MCF 10A (cell line): ENCODE measurements at regions of chr9 and their contacts with region 1.

Region 1: GRCh38 chr9:134778841-134779411 is 101.7 kb upstream of the FCN2 start:
- DNase-seq: peak; percentile 69
- H3K4me3 Mint-ChIP-seq: peak overlapping the region; percentile 12
- H3K27ac Mint-ChIP-seq: peak overlapping the region; percentile 57
- H3K4me1 Mint-ChIP-seq: peaks cover 23% of the 10 kb centered on the region
- H3K27me3 Mint-ChIP-seq: peaks cover 45% of the 10 kb centered on the region
- CTCF ChIP-seq: peak; percentile 65

Region 2: DNA sequence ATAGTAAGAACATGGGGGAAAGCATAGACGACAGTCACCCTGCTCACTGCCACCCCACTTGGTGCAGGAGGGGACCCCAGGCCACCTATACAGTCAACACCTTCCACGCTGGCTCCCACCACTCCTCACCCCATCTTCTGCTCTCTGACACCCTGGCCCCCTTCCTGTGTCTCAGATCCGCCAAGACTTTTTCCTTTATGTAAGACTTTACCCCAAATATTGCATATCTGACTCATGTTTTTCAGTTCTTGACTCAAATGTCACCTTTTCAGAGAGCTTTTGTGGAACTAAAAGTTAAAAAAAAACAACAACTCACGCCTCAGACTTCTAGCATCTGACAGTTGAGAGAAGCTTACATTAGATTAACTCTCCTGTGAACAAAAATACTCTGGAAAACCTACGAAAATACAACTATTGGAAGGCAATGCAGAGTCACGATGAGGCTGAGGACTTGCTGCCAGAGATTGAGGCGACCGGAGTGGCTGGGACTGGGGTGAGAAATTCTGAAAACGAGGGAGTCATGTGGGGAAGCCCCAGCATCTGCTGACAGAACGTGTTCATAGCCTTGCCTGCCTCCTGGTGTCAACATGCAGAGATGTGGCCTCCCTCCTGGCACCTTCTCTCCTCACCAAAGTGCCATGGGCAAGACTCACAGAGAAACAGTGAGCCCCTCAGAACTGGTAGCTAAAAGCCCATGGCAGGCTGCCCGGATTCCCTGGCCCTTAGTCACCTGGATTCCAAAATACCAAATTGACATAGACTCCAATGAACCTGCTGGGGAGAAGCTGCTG is 79.3 kb after region 1 on chr9:
- CTCF ChIA-PET with region 1: interaction called, 4 read pairs
- POLR2A ChIA-PET with region 1: interaction called, 4 read pairs
- intact Hi-C with region 1: loop called (anchors 2 kb)
- DNase-seq: peak; percentile 76
- H3K4me3 Mint-ChIP-seq: no peak overlapping the region
- H3K27ac Mint-ChIP-seq: no peak overlapping the region
- H3K4me1 Mint-ChIP-seq: peaks cover 11% of the 10 kb centered on the region
- H3K27me3 Mint-ChIP-seq: peaks cover 45% of the 10 kb centered on the region
- CTCF ChIP-seq: no peak

Region 3: GRCh38 chr9:135023088-135023791 is 244.3 kb after region 1 on chr9:
- CTCF ChIA-PET with region 1: no interaction called
- POLR2A ChIA-PET with region 1: interaction called, 3 read pairs
- intact Hi-C with region 1: loop called (anchors 10 kb)
- DNase-seq: peak; percentile 84
- H3K4me3 Mint-ChIP-seq: peak overlapping the region; percentile 38
- H3K27ac Mint-ChIP-seq: peak overlapping the region; percentile 46
- H3K4me1 Mint-ChIP-seq: peaks cover 13% of the 10 kb centered on the region
- H3K27me3 Mint-ChIP-seq: peaks cover 52% of the 10 kb centered on the region
- CTCF ChIP-seq: no peak